ENCODE measurements at regions of chr1 and their contacts with region 1.

Region 1: GRCh38 chr1:204398217-204399081 is 13.2 kb downstream of the PPP1R15B start:
- DNase-seq: peak; percentile 70
- ATAC-seq: peak; percentile 97
- H3K4me3 Mint-ChIP-seq: no peak overlapping the region
- H3K27ac Mint-ChIP-seq: peak overlapping the region; percentile 81
- H3K4me1 Mint-ChIP-seq: peaks cover 20% of the 10 kb centered on the region
- H3K27me3 Mint-ChIP-seq: no peaks in the 10 kb centered on the region
- CTCF ChIP-seq: peak; percentile 98

Region 2: DNA sequence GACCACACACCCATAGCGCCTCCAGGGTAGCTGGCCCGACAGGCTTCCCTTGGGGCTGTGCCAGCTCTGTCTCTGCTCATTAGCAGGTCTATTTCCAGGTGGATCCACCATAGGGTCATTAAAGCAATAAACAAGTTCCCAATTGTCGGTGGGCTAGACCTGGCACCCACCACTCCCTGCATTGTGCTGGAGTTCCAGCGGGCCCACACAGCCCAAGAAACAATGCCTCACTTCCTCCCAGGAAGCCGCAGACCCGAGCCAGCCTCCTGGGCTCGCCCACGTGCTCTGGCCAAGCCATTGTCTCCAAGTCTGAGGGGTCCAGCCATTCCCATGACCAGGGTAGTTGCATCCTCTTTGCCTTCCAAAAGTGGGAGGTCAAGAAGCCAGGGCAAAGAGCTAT is 353.0 kb before region 1 on chr1:
- CTCF ChIA-PET with region 1: no interaction called
- POLR2A ChIA-PET with region 1: no interaction called
- intact Hi-C with region 1: no loop called
- DNase-seq: no peak
- ATAC-seq: no peak
- H3K4me3 Mint-ChIP-seq: no peak overlapping the region
- H3K27ac Mint-ChIP-seq: no peak overlapping the region
- H3K4me1 Mint-ChIP-seq: no peaks in the 10 kb centered on the region
- H3K27me3 Mint-ChIP-seq: no peaks in the 10 kb centered on the region
- CTCF ChIP-seq: no peak

Region 3: DNA sequence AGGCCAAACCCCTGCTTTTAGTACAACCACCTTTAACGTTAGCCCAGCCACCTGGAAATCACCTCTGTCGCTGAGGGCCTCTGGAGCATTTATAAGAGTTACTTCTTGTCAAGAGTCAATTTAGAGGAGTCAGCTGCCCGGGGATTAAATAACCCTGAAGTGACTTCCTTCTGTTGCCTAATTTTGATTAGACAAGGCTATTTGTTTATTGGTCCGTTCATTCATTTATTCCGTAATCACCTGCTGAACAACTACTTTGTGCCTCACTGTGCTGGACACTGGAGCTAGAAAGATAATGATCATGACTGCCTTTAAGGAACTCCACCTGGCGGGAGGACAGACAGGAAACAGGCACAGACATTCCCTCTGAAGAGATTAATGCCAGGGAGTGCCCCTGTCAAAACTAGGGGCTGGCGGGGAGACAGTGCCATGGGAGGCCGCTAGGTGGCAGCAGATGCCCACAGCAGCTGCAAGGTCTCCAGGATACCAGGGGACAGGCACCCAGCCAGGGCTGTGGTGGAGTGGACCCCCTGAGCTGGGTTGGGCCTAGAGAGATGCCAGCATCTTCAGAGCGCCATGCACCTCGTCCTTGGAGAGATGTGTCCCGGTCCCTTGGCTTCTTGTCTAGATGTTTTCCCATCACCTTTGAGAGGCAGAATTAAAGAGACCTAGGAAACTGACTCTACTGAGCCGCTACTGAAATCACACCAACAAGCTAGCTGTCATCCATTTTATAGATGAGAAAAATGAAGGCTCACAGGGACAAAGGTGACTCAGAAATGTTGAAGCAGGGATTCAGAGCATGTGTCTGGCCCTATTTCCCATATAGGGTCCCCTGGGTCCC is 236.0 kb before region 1 on chr1:
- CTCF ChIA-PET with region 1: interaction called, 81 read pairs
- POLR2A ChIA-PET with region 1: no interaction called
- intact Hi-C with region 1: no loop called
- DNase-seq: peak; percentile 86
- ATAC-seq: peak; percentile 98
- H3K4me3 Mint-ChIP-seq: no peak overlapping the region
- H3K27ac Mint-ChIP-seq: no peak overlapping the region
- H3K4me1 Mint-ChIP-seq: peaks cover 2% of the 10 kb centered on the region
- H3K27me3 Mint-ChIP-seq: peaks cover 7% of the 10 kb centered on the region
- CTCF ChIP-seq: peak; percentile 96

Region 4: DNA sequence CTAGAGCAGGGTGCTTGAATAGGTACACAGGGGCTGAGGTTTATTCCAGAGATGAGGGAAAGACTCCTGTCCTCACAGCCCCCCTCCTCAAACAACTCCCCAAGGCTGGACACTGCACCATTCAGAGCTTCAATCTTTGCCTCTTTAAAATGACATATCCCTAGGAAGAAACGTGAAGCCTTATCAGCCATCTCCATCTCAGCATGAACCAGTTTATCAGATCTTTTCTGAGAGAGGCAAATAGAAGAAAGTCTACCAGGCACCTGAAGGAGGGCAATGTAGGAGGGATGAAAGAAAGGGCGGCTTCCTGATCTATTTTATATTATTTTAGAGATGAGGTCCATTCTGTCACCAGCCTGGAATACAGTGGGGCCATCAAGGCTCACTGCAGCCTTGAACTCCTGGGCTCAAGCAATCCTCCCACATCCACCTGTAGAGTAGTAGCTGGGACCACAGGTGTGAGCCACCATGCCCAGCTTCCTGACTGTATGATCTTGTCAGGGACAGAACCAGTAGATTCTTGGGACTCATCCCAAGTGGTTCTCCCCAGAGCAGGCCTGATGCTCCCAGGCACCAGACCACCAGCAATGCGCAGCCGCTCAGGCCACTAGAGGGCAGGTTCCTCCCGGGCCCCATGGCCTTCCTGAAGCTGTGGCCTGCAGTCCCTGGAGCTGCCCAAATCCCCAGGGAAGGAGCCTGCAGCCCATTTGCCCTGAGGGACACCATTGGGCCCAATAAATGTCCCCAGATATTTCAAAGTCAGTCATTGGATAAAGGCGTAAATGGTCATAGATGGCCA is 140.3 kb before region 1 on chr1:
- CTCF ChIA-PET with region 1: interaction called, 10 read pairs
- POLR2A ChIA-PET with region 1: no interaction called
- intact Hi-C with region 1: no loop called
- DNase-seq: peak; percentile 63
- ATAC-seq: peak; percentile 47
- H3K4me3 Mint-ChIP-seq: no peak overlapping the region
- H3K27ac Mint-ChIP-seq: no peak overlapping the region
- H3K4me1 Mint-ChIP-seq: no peaks in the 10 kb centered on the region
- H3K27me3 Mint-ChIP-seq: no peaks in the 10 kb centered on the region
- CTCF ChIP-seq: peak; percentile 75

Region 5: GRCh38 chr1:204377795-204378608 is 20.4 kb before region 1 on chr1:
- CTCF ChIA-PET with region 1: interaction called, 77 read pairs
- POLR2A ChIA-PET with region 1: interaction called, 5 read pairs
- intact Hi-C with region 1: no loop called
- DNase-seq: peak; percentile 67
- ATAC-seq: peak; percentile 73
- H3K4me3 Mint-ChIP-seq: peak overlapping the region; percentile 82
- H3K27ac Mint-ChIP-seq: peak overlapping the region; percentile 67
- H3K4me1 Mint-ChIP-seq: peaks cover 14% of the 10 kb centered on the region
- H3K27me3 Mint-ChIP-seq: peaks cover 14% of the 10 kb centered on the region
- CTCF ChIP-seq: no peak

Region 6: DNA sequence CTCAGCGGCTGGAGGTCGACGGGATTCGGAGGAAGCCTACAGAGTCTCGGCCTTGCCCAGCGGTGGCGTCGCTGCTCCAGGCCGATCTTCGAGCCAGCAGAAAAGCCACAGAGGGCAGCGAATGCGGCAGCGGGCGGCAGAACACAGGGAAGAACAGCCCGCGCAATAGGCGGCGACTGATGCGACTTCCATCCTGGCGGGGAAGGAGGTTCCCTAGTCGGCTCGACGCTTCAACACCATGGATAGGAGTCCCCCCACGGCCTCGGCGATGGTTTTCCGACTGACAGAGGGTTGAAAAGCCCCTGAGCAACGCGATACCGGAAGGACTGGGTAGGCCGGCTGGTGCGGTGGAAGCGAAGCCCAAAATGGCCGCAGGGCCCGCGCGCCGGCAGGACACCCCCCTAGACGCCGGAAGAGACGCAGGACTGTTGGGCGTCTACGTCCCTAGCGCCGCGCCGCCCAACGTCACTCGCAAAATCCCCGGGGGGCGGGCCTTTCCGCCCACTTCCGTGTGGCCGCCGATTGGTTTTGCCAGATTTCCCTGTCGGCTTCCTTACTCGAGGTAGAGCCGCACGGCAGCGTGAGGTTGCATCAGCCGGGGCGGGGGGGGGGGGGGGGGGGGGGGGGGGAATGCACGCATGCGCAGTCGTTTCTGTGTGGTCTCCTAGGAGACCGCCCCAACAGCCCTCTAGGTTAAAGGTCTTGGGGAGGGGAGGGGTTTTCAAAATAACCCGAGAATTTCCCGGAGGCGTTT is 13.2 kb after region 1 on chr1 and contains the start of gene PPP1R15B:
- CTCF ChIA-PET with region 1: interaction called, 99 read pairs
- POLR2A ChIA-PET with region 1: interaction called, 27 read pairs
- intact Hi-C with region 1: no loop called
- DNase-seq: peak; percentile 97
- ATAC-seq: peak; percentile 92
- H3K4me3 Mint-ChIP-seq: peak within 1 kb of the TSS; percentile 99
- H3K27ac Mint-ChIP-seq: peak within 1 kb of the TSS; percentile 100
- H3K4me1 Mint-ChIP-seq: peaks cover 19% of the 10 kb centered on the region
- H3K27me3 Mint-ChIP-seq: no peaks in the 10 kb centered on the region
- CTCF ChIP-seq: no peak
- total RNA-seq, gene PPP1R15B: 63.8 to 64.6 TPM

Region 7: DNA sequence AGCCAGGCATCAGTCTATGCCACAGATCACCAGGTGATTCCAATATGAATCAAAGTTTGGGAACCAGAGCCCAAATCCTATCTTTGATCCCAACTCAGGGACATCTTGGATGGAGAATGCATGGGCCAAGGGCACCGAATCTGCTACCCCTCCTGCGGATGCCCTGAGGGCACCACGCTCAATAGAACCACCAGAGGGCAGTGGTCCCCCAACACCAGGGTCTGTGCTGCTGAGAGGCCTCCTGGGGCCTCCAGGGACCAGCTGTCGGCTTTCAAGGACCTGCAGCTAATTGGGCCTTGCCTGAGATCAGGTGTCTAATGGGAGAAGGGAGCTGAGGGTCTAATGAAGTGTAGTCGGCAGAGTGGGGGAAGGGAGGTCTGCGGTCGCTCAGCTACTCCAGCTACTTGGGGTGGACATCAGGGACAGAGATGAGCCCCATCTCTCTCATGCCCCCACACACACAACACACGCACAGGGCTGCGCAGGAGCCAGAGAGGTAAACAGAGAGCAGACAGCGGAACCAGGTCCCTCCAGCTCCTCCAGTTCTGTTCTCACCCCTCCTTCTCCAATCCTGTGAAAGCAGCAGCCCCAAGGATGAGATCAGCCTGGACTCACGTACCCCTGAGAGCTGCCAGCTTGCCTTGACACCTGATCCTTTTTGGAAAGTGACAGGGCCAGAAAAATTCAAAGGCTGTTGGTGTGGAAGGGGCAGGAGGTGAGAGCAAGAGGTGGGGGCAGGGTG is 48.1 kb after region 1 on chr1:
- CTCF ChIA-PET with region 1: interaction called, 10 read pairs
- POLR2A ChIA-PET with region 1: interaction called, 3 read pairs
- intact Hi-C with region 1: no loop called
- DNase-seq: peak; percentile 87
- ATAC-seq: peak; percentile 91
- H3K4me3 Mint-ChIP-seq: no peak overlapping the region
- H3K27ac Mint-ChIP-seq: peak overlapping the region; percentile 69
- H3K4me1 Mint-ChIP-seq: peaks cover 16% of the 10 kb centered on the region
- H3K27me3 Mint-ChIP-seq: no peaks in the 10 kb centered on the region
- CTCF ChIP-seq: peak; percentile 66

Region 8: DNA sequence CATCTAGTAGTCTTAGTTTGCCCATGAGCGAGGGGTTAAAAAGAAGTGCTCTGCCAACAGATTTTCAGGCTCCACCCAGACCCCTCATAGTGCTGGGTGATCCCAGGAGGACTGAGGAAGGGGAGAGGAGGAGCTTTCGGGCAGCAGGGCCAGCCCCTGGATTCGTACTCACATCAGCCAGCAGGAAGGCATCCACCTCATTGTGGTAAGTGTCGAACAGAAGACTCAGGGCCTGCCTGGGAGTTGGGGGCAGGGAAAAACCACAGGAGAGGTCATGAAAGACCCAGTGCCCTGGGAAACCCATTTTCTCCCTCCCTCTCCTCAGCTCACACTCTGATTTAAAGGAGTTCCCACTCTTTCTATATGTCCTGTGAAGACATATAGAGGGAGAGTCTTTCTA is 61.3 kb after region 1 on chr1:
- CTCF ChIA-PET with region 1: no interaction called
- POLR2A ChIA-PET with region 1: no interaction called
- intact Hi-C with region 1: no loop called
- DNase-seq: no peak
- ATAC-seq: no peak
- H3K4me3 Mint-ChIP-seq: no peak overlapping the region
- H3K27ac Mint-ChIP-seq: no peak overlapping the region
- H3K4me1 Mint-ChIP-seq: peaks cover 39% of the 10 kb centered on the region
- H3K27me3 Mint-ChIP-seq: no peaks in the 10 kb centered on the region
- CTCF ChIP-seq: no peak

Region 9: GRCh38 chr1:204506961-204507387 is 108.5 kb after region 1 on chr1:
- CTCF ChIA-PET with region 1: interaction called, 24 read pairs
- POLR2A ChIA-PET with region 1: no interaction called
- intact Hi-C with region 1: no loop called
- DNase-seq: peak; percentile 93
- ATAC-seq: peak; percentile 75
- H3K4me3 Mint-ChIP-seq: peak overlapping the region; percentile 89
- H3K27ac Mint-ChIP-seq: peak overlapping the region; percentile 99
- H3K4me1 Mint-ChIP-seq: peaks cover 26% of the 10 kb centered on the region
- H3K27me3 Mint-ChIP-seq: peaks cover 3% of the 10 kb centered on the region
- CTCF ChIP-seq: no peak